Esophagus muscularis mucosa (tissue), 4 donors: ENCODE measurements at regions of chr12 and their contacts with region 1.

Region 1: DNA sequence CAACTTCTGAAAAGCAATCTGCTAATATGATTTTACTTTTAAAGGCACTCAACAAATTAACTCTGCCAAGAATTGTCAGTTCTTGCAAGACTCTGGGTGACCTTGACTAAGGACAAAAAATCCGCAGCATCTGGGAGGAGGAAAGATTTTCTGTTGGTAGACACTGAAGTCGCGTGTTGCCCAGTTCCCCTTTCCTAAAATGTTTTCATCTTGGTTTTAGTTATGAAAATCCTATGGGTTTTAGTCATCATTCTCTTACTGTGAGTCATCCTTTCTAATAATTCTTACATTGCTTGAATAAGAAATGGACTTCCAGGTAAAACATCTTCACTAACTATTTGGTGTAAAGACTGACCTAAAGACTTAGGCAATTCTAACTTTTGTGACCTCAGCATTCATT is 9.1 kb downstream of the GSG1 start:
- DNase-seq: peak; percentile 55
- H3K4me3 ChIP-seq: no peak overlapping the region
- H3K27ac ChIP-seq: no peak overlapping the region
- H3K4me1 ChIP-seq: peaks cover 21 to 41% (median 28%) of the 10 kb centered on the region in 4 donors
- H3K27me3 ChIP-seq: no peaks in the 10 kb centered on the region
- CTCF ChIP-seq: no peak
- EP300 ChIP-seq: no peak
- POLR2A ChIP-seq: no peak

Region 2: DNA sequence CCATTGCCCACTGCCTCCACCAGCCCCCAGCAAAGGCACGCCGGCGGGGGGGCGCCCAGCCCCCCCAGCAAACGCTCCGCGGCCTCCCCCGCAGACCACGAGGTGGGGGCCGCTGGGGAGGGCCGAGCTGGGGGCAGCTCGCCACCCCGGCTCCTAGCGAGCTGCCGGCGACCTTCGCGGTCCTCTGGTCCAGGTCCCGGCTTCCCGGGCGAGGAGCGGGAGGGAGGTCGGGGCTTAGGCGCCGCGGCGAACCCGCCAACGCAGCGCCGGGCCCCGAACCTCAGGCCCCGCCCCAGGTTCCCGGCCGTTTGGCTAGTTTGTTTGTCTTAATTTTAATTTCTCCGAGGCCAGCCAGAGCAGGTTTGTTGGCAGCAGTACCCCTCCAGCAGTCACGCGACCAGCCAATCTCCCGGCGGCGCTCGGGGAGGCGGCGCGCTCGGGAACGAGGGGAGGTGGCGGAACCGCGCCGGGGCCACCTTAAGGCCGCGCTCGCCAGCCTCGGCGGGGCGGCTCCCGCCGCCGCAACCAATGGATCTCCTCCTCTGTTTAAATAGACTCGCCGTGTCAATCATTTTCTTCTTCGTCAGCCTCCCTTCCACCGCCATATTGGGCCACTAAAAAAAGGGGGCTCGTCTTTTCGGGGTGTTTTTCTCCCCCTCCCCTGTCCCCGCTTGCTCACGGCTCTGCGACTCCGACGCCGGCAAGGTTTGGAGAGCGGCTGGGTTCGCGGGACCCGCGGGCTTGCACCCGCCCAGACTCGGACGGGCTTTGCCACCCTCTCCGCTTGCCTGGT is 377.4 kb before region 1 on chr12 and contains the start of gene CDKN1B:
- intact Hi-C with region 1: no loop called
- DNase-seq: peak; percentile 98
- H3K4me3 ChIP-seq: peak within 1 kb of the TSS; percentile 75 to 95 (median 86)
- H3K27ac ChIP-seq: peak within 1 kb of the TSS; percentile 98 to 100 (median 100)
- H3K4me1 ChIP-seq: peaks cover 54 to 67% (median 63%) of the 10 kb centered on the region in 4 donors
- H3K27me3 ChIP-seq: no peaks in the 10 kb centered on the region
- CTCF ChIP-seq: no peak
- EP300 ChIP-seq: no peak
- POLR2A ChIP-seq: peak; percentile 49
- total RNA-seq, gene CDKN1B: 48.7 to 97.4 (median 70.6) TPM

Region 3: GRCh38 chr12:12916135-12916944 is 178.0 kb before region 1 on chr12:
- intact Hi-C with region 1: loop called (anchors 10 kb)
- DNase-seq: peak; percentile 97
- H3K4me3 ChIP-seq: peak overlapping the region in 3 of 4 donors; percentile 7 to 20 (median 19)
- H3K27ac ChIP-seq: peak overlapping the region; percentile 27 to 43 (median 32)
- H3K4me1 ChIP-seq: peaks cover 7 to 19% (median 10%) of the 10 kb centered on the region in 4 donors
- H3K27me3 ChIP-seq: no peaks in the 10 kb centered on the region
- CTCF ChIP-seq: peak; percentile 95 to 99 (median 96)
- EP300 ChIP-seq: no peak
- POLR2A ChIP-seq: no peak

Region 4: DNA sequence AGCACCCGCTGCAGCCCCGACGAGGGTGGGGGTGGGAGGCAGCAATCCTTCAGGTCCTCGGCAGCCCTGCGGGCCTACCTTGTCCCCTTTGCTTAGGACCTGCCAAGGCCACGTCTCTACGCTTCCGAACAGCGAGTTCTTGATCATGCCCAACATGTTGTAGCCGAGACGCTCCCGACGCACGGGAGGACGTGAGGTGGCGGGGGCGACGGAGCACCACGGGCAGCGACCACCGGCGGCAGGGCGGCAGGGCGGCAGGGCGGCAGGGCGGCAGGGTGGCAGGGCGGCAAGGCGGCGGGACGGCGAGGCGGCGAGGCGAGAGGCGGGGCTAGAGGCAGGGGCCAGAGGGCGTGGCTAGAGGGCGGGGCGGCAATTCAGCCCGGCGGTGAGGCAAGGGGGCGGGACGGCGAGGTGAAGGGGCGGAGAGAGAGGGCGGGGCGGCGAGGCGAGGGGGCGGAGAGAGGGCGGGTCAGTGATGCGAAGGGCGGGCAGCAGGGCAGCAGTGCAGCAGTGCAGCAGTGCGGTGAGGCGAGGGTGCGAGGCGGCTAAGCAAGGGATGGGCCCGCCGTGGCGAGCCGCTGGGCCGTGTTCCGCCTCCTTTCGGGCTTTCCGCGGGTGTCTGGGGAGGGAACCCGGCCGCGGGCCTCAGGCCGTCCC is 94.3 kb before region 1 on chr12 and contains the start of gene HEBP1:
- intact Hi-C with region 1: loop called (anchors 5 kb)
- DNase-seq: peak; percentile 98
- H3K4me3 ChIP-seq: peak within 1 kb of the TSS; percentile 87 to 93 (median 88)
- H3K27ac ChIP-seq: peak within 1 kb of the TSS; percentile 94 to 99 (median 97)
- H3K4me1 ChIP-seq: peaks cover 32 to 61% (median 50%) of the 10 kb centered on the region in 4 donors
- H3K27me3 ChIP-seq: no peaks in the 10 kb centered on the region
- CTCF ChIP-seq: no peak
- EP300 ChIP-seq: no peak
- POLR2A ChIP-seq: peak; percentile 69
- total RNA-seq, gene HEBP1: 40.6 to 70.6 (median 61.9) TPM

Region 5: DNA sequence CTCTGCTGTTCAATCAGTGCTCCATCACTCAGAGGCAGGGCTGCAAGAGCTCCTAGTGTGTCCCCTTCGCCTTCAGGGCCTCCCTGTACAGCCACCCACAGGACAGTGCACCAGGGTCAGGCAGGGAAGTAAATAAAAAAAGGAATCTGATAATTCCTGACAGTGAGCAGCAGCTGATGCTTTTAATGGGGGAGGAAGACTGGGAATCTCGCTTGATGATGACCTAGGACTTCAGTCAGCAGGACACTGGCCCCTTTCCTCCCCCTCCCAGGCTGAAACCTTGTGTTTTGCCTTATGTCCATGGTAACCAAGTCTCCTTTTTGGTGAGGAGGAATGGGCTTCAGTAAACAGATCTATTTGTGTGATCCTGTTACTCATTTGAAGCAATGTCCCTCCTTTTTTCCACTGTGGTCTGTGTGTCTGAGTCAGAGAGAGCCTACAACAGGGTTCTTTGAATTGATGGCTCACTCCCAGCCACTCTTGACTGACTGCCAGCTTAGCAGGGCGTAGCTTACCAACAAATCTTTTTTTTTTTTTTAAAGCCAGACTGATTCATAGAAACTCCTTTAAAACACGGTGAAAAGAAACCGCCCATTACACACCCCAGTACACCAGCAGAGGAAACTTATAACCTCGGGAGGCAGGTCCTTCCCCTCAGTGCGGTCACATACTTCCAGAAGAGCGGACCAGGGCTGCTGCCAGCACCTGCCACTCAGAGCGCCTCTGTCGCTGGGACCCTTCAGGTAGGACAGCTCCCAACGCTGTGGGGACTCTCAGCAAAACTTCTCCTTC is 102.0 kb after region 1 on chr12 and contains the start of gene EMP1:
- intact Hi-C with region 1: loop called (anchors 5 kb)
- DNase-seq: peak; percentile 98
- H3K4me3 ChIP-seq: peak within 1 kb of the TSS; percentile 52 to 64 (median 58)
- H3K27ac ChIP-seq: peak within 1 kb of the TSS; percentile 77 to 88 (median 86)
- H3K4me1 ChIP-seq: peaks cover 25 to 54% (median 39%) of the 10 kb centered on the region in 4 donors
- H3K27me3 ChIP-seq: peaks cover 0 to under 1% (median 0%) of the 10 kb centered on the region in 4 donors
- CTCF ChIP-seq: no peak
- EP300 ChIP-seq: no peak
- POLR2A ChIP-seq: peak; percentile 89
- total RNA-seq, gene EMP1: 42.8 to 425 (median 63.0) TPM

Region 6: DNA sequence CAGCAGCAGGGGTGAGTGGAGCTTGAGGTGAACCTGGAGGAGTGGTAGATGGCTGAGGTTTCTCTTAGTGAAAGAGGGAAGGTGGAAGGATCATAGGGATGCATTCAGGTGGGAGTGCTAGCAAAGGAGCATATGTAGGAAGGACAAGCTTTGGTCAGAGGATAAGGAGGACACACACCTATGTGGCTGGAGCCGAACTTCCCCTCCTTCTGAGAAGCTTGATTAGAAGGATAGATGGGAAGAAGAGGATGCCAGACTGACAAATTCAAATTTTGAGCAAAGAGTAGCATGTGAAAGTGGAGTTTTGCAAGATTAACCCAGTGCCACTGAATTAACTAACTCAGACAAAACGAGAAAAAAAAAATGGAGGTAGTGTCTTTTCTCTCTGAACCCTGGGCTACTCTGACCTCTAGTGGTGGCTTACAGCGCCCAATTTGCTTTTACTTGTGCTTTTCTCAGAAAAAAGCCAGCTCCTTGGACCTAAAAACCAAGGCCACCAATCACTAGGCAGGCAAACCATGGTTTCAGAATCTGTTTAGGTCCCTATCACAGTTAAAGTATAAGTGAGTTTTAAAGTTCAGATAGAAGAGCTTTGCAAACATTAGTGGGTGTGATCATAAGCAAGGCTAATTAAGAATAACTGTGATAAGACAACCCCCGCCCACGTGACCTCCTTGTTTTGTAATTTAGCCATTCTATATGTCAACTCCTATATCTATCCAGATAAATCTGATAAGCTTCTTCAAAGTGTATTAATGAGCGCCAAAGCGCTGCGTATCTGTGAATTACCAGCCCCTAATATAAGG is 117.7 kb after region 1 on chr12:
- intact Hi-C with region 1: loop called (anchors 5 kb)
- DNase-seq: no peak
- H3K4me3 ChIP-seq: no peak overlapping the region
- H3K27ac ChIP-seq: no peak overlapping the region
- H3K4me1 ChIP-seq: peaks cover 33 to 49% (median 37%) of the 10 kb centered on the region in 4 donors
- H3K27me3 ChIP-seq: no peaks in the 10 kb centered on the region
- CTCF ChIP-seq: peak; percentile 74 to 79 (median 78)
- EP300 ChIP-seq: no peak
- POLR2A ChIP-seq: no peak